Activated CD4-positive, alpha-beta T cell treated with anti-CD3 and anti-CD28 coated beads, Interleukin-2, amount 10 ng/mL, durations not matched to agents 24 days and 14 days (primary cell): ENCODE measurements at regions of chr4 and their contacts with region 1.

Region 1: GRCh38 chr4:108080747-108081146 is 88.0 kb downstream of the LEF1 start:
- DNase-seq: peak; percentile 76
- H3K4me3 Mint-ChIP-seq: peak overlapping the region; percentile 74
- H3K27ac Mint-ChIP-seq: peak overlapping the region; percentile 78
- H3K4me1 Mint-ChIP-seq: peaks cover 41% of the 10 kb centered on the region
- H3K27me3 Mint-ChIP-seq: no peaks in the 10 kb centered on the region

Region 2: GRCh38 chr4:108053251-108053711 is 27.5 kb before region 1 on chr4:
- intact Hi-C with region 1: loop called (anchors 2 kb)
- DNase-seq: no peak
- H3K4me3 Mint-ChIP-seq: peak overlapping the region; percentile 31
- H3K27ac Mint-ChIP-seq: peak overlapping the region; percentile 81
- H3K4me1 Mint-ChIP-seq: peaks cover 62% of the 10 kb centered on the region
- H3K27me3 Mint-ChIP-seq: no peaks in the 10 kb centered on the region

Region 3: GRCh38 chr4:108094923-108095482 is 14.3 kb after region 1 on chr4:
- intact Hi-C with region 1: loop called (anchors 1 kb)
- DNase-seq: peak; percentile 57
- H3K4me3 Mint-ChIP-seq: peak overlapping the region; percentile 20
- H3K27ac Mint-ChIP-seq: peak overlapping the region; percentile 45
- H3K4me1 Mint-ChIP-seq: peaks cover 69% of the 10 kb centered on the region
- H3K27me3 Mint-ChIP-seq: no peaks in the 10 kb centered on the region